A549 (cell line): ENCODE measurements at regions of chr2 and their contacts with region 1.

Region 1: DNA sequence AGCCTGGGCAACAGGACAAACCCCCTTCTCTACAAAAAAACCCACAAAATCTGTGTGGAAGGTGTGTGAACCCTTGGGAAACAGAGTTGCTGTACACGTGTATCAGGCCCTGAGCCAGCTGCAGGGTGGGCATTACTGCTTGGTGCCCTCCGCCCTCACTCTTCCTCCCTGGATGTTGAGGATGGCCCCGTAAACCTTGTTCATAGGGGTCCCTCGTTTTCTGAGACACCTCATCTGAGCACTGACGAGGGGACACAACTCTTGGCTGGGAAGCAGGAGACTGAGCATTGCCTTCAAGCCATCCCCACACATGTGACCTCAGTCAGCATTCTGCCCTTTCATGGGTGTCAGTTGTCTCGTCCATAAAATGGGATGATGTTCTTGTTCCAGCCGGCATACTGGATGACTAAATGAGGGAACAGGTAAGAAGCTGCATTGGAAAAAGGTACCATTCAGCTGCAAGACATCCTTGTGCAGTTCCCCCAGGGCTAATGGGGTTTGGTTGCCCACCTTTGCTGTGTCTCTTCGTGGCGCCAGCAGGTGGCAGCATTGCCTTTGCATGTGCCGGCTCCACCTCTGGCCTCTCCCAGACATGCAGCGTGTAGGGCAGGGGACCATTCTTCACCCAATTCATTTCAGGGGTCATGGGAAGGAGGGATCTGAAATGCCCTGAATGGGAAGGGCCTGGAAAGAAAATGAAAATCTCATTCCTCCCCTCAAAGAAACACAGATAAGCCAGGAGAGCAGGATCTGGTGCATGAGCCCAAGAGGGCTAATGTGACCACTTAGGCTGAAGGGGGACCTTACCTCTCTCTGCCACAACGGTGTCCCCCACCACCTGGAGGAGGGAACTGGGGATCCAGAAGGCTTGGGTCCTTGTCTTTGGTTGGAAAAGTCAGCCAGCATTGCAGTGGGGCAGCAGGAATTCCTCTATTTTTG is 36.4 kb upstream of the HAAO start:
- DNase-seq: peak; percentile 80 to 96
- ATAC-seq: peak; percentile 89 to 96
- H3K4me3 ChIP-seq: no peak overlapping the region
- H3K27ac ChIP-seq: peak overlapping the region; percentile 9 to 57; a peak in 5 of 6 replicates
- H3K4me1 ChIP-seq: peaks cover 15% of the 10 kb centered on the region
- CTCF ChIP-seq: peak; percentile 93
- EP300 ChIP-seq: no peak
- POLR2A ChIP-seq: no peak
- RAD21 ChIP-seq: peak; percentile 87 to 93

Region 2: GRCh38 chr2:42693013-42693615 is 135.6 kb before region 1 on chr2:
- CTCF ChIA-PET with region 1: no interaction called
- POLR2A ChIA-PET with region 1: no interaction called
- DNase-seq: no peak
- ATAC-seq: peak; percentile 39 to 47; a peak in 3 of 6 replicates
- H3K4me3 ChIP-seq: no peak overlapping the region
- H3K27ac ChIP-seq: peak overlapping the region in 1 of 2 experiments; percentile 9; a peak in 1 of 6 replicates
- H3K4me1 ChIP-seq: peaks cover 3% of the 10 kb centered on the region; the same call in 1 of the 3 replicates
- CTCF ChIP-seq: no peak
- EP300 ChIP-seq: no peak
- POLR2A ChIP-seq: no peak
- RAD21 ChIP-seq: no peak

Region 3: DNA sequence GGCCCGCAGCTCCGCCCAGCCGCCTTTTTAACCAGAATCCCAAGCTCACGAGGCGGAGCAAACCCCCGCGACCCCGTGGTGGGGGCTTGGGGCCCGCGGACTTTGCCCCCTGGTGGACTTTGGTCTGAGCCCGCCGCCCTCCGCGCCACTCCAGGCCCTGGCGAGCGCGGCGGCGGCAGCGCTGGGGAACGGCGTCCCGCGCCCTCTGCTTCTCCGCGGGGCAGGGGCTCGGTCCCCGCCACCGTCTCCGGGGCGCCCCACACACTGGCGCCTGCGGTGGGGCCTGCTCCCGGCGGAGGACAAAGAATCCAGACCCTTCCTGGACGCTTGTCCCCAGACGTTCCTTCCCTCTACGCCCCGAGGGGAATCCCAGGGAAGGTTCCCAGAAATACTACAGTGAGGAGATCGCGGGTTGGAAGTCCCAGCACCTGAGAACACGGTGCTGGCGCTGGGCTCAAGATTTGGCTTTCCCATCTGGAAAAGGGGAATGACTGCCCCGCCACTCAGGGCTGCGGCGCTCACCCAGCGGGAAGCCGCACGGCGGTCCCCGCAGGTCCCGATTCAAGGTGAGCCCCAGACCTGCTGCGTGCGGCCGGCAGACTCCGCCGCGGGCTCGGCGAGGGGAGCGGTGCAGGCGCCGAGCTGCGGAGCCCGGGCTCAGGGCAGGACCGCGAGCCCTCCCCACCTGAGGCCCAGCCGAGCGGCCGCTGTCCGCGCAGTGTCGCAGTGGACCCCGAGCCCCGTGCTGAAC is 36.0 kb before region 1 on chr2 and contains the start of gene HAAO:
- CTCF ChIA-PET with region 1: no interaction called
- POLR2A ChIA-PET with region 1: no interaction called
- DNase-seq: no peak
- ATAC-seq: no peak
- H3K4me3 ChIP-seq: no peak within 1 kb of the TSS
- H3K27ac ChIP-seq: no peak within 1 kb of the TSS
- H3K4me1 ChIP-seq: peaks cover 7% of the 10 kb centered on the region; the same call in 2 of the 3 replicates
- CTCF ChIP-seq: no peak
- EP300 ChIP-seq: no peak
- POLR2A ChIP-seq: no peak
- RAD21 ChIP-seq: no peak
- polyA plus RNA-seq, gene HAAO: not detected in 2 replicates

Region 4: GRCh38 chr2:42810121-42810970 is 18.4 kb before region 1 on chr2:
- CTCF ChIA-PET with region 1: interaction called, 56 read pairs
- POLR2A ChIA-PET with region 1: interaction called, 8 read pairs
- DNase-seq: peak; percentile 92 to 98
- ATAC-seq: peak; percentile 84 to 88
- H3K4me3 ChIP-seq: peak overlapping the region; percentile 45
- H3K27ac ChIP-seq: peak overlapping the region; percentile 88 to 92
- H3K4me1 ChIP-seq: peaks cover 10% of the 10 kb centered on the region
- CTCF ChIP-seq: peak; percentile 3; the same call in 1 of the 3 replicates
- EP300 ChIP-seq: no peak
- POLR2A ChIP-seq: peak; percentile 87
- RAD21 ChIP-seq: 0 out of 5 replicates have a peak, but pooled peaks of 1 of the 2 experiments have one; percentile 8

Region 5: GRCh38 chr2:42859006-42859552 is 30.3 kb after region 1 on chr2:
- CTCF ChIA-PET with region 1: interaction called, 42 read pairs
- POLR2A ChIA-PET with region 1: no interaction called
- DNase-seq: peak; percentile 61 to 76
- ATAC-seq: peak in 1 of 2 experiments; percentile 74; a peak in 3 of 6 replicates
- H3K4me3 ChIP-seq: no peak overlapping the region
- H3K27ac ChIP-seq: no peak overlapping the region
- H3K4me1 ChIP-seq: no peaks in the 10 kb centered on the region
- CTCF ChIP-seq: peak; percentile 98
- EP300 ChIP-seq: no peak
- POLR2A ChIP-seq: no peak
- RAD21 ChIP-seq: peak; percentile 95 to 97

Region 6: GRCh38 chr2:42917425-42917927 is 88.7 kb after region 1 on chr2:
- CTCF ChIA-PET with region 1: interaction called, 21 read pairs
- POLR2A ChIA-PET with region 1: no interaction called
- DNase-seq: no peak
- ATAC-seq: peak in 1 of 2 experiments; percentile 40; a peak in 2 of 6 replicates
- H3K4me3 ChIP-seq: no peak overlapping the region
- H3K27ac ChIP-seq: no peak overlapping the region
- H3K4me1 ChIP-seq: no peaks in the 10 kb centered on the region; the same call in 2 of the 3 replicates
- CTCF ChIP-seq: no peak
- EP300 ChIP-seq: no peak
- POLR2A ChIP-seq: no peak
- RAD21 ChIP-seq: no peak

Region 7: GRCh38 chr2:42951263-42951938 is 122.6 kb after region 1 on chr2:
- CTCF ChIA-PET with region 1: interaction called, 88 read pairs
- POLR2A ChIA-PET with region 1: no interaction called
- DNase-seq: no peak
- ATAC-seq: no peak
- H3K4me3 ChIP-seq: no peak overlapping the region
- H3K27ac ChIP-seq: no peak overlapping the region
- H3K4me1 ChIP-seq: no peaks in the 10 kb centered on the region
- CTCF ChIP-seq: no peak
- EP300 ChIP-seq: no peak
- POLR2A ChIP-seq: no peak
- RAD21 ChIP-seq: no peak

Region 8: DNA sequence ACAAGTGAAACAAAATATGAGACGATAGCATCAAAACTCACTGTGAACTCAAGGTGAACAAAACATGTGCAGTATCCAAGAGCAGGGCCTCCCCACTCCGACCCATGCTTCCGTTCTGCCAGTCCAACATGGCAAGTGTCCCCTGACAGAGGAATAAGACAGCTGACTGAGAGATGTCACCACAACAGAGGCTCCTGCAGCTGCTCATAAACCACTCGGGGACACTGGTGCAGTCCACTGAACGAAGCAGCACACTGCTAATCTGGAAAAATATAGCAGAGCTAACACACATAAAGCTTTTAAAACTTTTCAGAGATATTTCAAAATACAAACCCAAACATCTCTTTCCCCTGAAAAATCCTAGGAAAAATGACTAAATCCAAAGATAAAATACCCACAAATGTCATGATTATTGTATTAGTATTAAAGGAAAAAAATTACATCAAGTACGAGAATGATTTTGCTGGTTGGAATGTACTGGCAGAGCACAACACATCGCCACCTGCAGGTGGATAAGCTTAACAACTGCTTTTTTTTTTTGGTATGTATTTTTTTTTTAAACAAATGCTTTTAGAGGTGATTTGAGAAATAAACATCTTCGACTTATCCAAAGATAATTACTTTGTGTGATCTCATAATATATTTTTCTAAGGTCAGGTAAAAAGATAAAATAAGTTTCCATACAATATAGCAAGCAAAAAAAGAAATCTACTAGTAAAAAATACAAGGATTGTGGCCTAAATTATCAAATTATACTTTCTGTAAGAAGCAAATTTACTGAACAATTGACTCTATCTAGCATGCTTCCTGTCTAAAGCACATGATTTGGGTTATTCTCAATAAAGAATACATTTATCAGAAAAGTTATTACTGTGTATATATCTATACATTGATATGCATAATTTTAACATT is 748.5 kb after region 1 on chr2:
- CTCF ChIA-PET with region 1: interaction called, 17 read pairs
- POLR2A ChIA-PET with region 1: no interaction called
- DNase-seq: peak; percentile 46 to 77
- ATAC-seq: peak; percentile 59 to 67; a peak in 5 of 6 replicates
- H3K4me3 ChIP-seq: no peak overlapping the region
- H3K27ac ChIP-seq: 0 out of 6 replicates have a peak overlapping the region, but pooled peaks of 1 of the 2 experiments have one; percentile 14
- H3K4me1 ChIP-seq: no peaks in the 10 kb centered on the region
- CTCF ChIP-seq: peak; percentile 93
- EP300 ChIP-seq: no peak
- POLR2A ChIP-seq: no peak
- RAD21 ChIP-seq: peak; percentile 37 to 47; a peak in 4 of 5 replicates